Psoas muscle (tissue), 8 donors: ENCODE measurements at regions of chr10 and their contacts with region 1.

Region 1: GRCh38 chr10:91632671-91633550 is at the start of gene PPP1R3C:
- DNase-seq: peak; percentile 92 to 97
- ATAC-seq: peak; percentile 84 to 96 (median 88)
- H3K4me3 ChIP-seq: peak within 1 kb of the TSS; percentile 70
- H3K27ac ChIP-seq: peak within 1 kb of the TSS; percentile 92
- H3K4me1 ChIP-seq: peaks cover 7% of the 10 kb centered on the region
- H3K27me3 ChIP-seq: no peaks in the 10 kb centered on the region
- CTCF ChIP-seq: peak; percentile 30
- total RNA-seq, gene PPP1R3C: 89.6 to 359 (median 280) TPM

Region 2: GRCh38 chr10:91409869-91410637 is 222.9 kb before region 1 on chr10 and contains the start of gene HECTD2:
- intact Hi-C with region 1: loop called in 1 of 2 experiments (anchors 10 kb)
- DNase-seq: peak; percentile 86 to 91
- ATAC-seq: peak; percentile 82 to 85 (median 84)
- H3K4me3 ChIP-seq: peak within 1 kb of the TSS; percentile 97
- H3K27ac ChIP-seq: peak within 1 kb of the TSS; percentile 100
- H3K4me1 ChIP-seq: peaks cover 35% of the 10 kb centered on the region
- H3K27me3 ChIP-seq: no peaks in the 10 kb centered on the region
- CTCF ChIP-seq: peak; percentile 62
- total RNA-seq, gene HECTD2: 5.9 to 15.0 (median 10.8) TPM

Region 3: DNA sequence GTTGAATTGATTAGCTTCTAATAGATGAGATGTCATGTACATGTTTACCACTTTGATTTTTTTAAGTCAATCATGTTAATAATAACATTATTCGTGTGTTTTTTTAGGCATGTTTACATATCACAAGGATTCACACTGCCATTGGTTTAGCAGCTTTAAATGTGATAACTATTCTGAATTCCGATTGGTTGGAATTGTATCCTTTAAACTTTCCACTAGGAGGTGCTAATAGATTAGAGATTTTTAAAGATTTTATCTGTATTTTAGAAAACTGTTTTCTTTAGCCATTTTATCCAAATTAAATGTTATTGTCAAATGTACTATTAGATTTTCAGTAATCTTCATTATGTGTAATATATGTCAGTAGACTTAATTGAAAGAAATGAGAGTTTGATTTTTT is 139.6 kb before region 1 on chr10:
- intact Hi-C with region 1: loop called (anchors 2 kb)
- DNase-seq: no peak
- ATAC-seq: peak in 2 of 4 donors; percentile 67 to 78
- H3K4me3 ChIP-seq: no peak overlapping the region
- H3K27ac ChIP-seq: no peak overlapping the region
- H3K4me1 ChIP-seq: peaks cover 15% of the 10 kb centered on the region
- H3K27me3 ChIP-seq: no peaks in the 10 kb centered on the region
- CTCF ChIP-seq: peak; percentile 58

Region 4: DNA sequence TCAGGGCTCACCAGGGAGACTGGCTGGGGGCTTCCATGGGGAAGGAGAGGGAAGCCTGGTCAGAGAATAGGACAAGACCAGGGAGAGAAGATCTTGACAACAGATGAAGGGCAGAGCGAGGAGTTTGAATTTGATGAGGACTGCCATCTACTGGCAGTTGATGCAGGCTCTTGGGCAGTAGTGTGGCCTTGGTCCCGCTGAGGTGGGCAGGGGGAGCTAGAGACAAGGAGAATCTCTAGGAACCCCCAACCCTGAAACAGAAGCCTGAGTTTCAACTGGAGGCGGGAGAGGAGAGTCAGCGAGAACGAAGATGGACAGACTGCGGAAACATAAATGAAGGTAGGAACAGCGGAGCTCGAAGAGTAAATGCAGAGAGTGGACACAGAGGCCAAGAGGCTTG is 81.1 kb before region 1 on chr10:
- intact Hi-C with region 1: loop called (anchors 2 to 5 kb)
- DNase-seq: no peak
- ATAC-seq: peak; percentile 66 to 79 (median 76)
- H3K4me3 ChIP-seq: peak overlapping the region; percentile 25
- H3K27ac ChIP-seq: peak overlapping the region; percentile 50
- H3K4me1 ChIP-seq: peaks cover 32% of the 10 kb centered on the region
- H3K27me3 ChIP-seq: no peaks in the 10 kb centered on the region
- CTCF ChIP-seq: peak; percentile 59

Region 5: GRCh38 chr10:91575044-91575610 is 57.8 kb before region 1 on chr10:
- intact Hi-C with region 1: no loop called
- DNase-seq: no peak
- ATAC-seq: peak in 2 of 4 donors; percentile 11 to 29
- H3K4me3 ChIP-seq: no peak overlapping the region
- H3K27ac ChIP-seq: peak overlapping the region; percentile 48
- H3K4me1 ChIP-seq: peaks cover 31% of the 10 kb centered on the region
- H3K27me3 ChIP-seq: no peaks in the 10 kb centered on the region
- CTCF ChIP-seq: no peak

Region 6: GRCh38 chr10:91587710-91588638 is 44.9 kb before region 1 on chr10:
- intact Hi-C with region 1: loop called (anchors 2 kb)
- DNase-seq: peak in 1 of 2 donors; percentile 59
- ATAC-seq: peak; percentile 42 to 61 (median 51)
- H3K4me3 ChIP-seq: peak overlapping the region; percentile 14
- H3K27ac ChIP-seq: peak overlapping the region; percentile 95
- H3K4me1 ChIP-seq: peaks cover 66% of the 10 kb centered on the region
- H3K27me3 ChIP-seq: no peaks in the 10 kb centered on the region
- CTCF ChIP-seq: no peak